WTC11 (cell line): ENCODE measurements at regions of chr17 and their contacts with region 1.

Region 1: GRCh38 chr17:29640413-29640812 is 17.7 kb upstream of the CORO6 start:
- DNase-seq: no peak
- ATAC-seq: no peak
- H3K4me3 Mint-ChIP-seq: no peak overlapping the region
- H3K27ac Mint-ChIP-seq: peak overlapping the region; percentile 38
- H3K4me1 Mint-ChIP-seq: peaks cover 28% of the 10 kb centered on the region
- H3K27me3 Mint-ChIP-seq: no peaks in the 10 kb centered on the region
- CTCF ChIP-seq: no peak

Region 2: GRCh38 chr17:29420128-29420527 is 220.3 kb before region 1 on chr17:
- CTCF ChIA-PET with region 1: no interaction called
- POLR2A ChIA-PET with region 1: no interaction called
- DNase-seq: no peak
- ATAC-seq: no peak
- H3K4me3 Mint-ChIP-seq: no peak overlapping the region
- H3K27ac Mint-ChIP-seq: no peak overlapping the region
- H3K4me1 Mint-ChIP-seq: no peaks in the 10 kb centered on the region
- H3K27me3 Mint-ChIP-seq: no peaks in the 10 kb centered on the region
- CTCF ChIP-seq: no peak

Region 3: DNA sequence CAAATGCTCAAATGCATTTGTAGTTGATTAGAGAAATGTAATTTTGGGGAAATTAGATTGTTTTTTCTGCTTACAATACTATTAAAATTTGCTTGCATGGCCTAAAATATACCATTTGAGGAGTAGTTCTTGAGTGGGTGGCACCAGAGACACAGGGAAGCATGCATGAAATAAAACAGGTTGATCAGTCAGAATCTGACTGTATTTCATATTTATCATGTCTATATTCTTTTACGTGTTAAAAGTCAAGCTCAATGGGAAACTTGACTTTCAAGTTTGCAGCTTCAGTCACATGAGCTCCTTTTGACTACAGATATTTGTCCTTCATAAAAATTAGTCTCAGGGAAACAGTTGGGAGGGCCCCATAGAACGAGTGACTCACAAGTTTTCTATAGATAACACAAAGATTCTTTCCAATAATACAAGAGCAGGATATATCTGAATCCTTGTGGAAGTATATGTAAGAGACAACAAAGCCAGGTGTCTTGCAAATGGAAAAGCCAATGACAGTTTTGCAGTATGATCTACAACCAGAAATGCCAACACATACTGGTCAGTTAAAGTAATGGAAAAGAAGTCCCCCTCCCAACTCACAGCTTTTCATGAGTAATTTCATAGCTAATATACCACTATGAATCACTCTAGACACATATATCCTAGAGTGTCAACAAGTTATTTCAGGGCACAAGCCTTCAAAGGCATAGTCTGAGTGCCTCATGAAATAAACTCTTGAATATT is 24.5 kb after region 1 on chr17:
- CTCF ChIA-PET with region 1: interaction called, 12 read pairs
- POLR2A ChIA-PET with region 1: no interaction called
- DNase-seq: no peak
- ATAC-seq: no peak
- H3K4me3 Mint-ChIP-seq: no peak overlapping the region
- H3K27ac Mint-ChIP-seq: no peak overlapping the region
- H3K4me1 Mint-ChIP-seq: peaks cover 11% of the 10 kb centered on the region
- H3K27me3 Mint-ChIP-seq: no peaks in the 10 kb centered on the region
- CTCF ChIP-seq: no peak

Region 4: DNA sequence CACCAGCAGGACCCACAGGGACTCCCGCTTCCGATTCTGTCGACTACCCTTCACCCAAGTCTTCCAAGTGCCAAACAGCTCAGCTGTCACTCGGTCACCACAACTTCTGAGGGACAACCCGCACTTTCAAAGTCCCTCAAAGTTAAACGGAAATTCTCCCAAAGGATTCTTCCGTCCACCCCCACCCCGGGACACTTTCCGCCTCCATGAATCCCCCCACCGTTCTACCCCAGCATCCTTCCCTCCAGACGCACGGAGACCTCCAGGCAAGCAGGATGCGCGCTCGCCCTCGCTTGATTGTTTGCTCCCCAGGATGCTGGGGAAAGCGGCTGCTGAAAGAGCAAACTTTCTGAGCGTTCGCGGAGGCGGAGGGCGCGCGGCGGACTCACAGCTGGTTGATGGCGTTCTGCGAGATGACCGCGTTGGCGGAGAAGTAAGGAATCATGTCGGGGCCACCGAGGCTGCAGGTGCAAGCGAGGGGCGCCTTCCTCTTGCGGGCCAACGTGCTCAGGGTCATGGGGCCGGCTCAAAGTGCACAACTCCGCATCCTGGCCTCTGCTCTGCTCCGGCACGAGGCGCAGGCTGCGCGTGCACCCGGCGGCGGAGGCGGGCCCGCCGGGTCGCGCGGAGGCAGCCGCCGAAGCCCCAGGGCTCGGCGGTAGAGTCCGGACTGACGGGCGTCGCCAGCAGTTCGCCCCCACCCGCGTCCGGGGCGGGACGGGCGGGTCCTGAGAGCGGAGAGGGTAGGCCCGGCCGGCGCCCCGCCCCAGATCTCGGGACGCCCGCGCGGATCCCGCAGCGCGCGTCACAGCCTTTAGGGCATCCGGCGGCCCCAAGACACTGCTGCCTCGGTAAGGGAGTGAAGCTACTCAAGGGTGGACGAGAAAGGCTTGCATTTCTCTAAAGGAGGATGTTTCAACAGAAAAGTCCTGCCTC is 120.6 kb after region 1 on chr17:
- CTCF ChIA-PET with region 1: interaction called, 18 read pairs
- POLR2A ChIA-PET with region 1: no interaction called
- DNase-seq: peak; percentile 77
- ATAC-seq: peak; percentile 89
- H3K4me3 Mint-ChIP-seq: peak overlapping the region; percentile 83
- H3K27ac Mint-ChIP-seq: no peak overlapping the region; the same call in 1 of the 2 replicates
- H3K4me1 Mint-ChIP-seq: peaks cover 14% of the 10 kb centered on the region
- H3K27me3 Mint-ChIP-seq: peaks cover 21% of the 10 kb centered on the region
- CTCF ChIP-seq: no peak

Region 5: GRCh38 chr17:29789196-29790170 is 149.1 kb after region 1 on chr17:
- CTCF ChIA-PET with region 1: interaction called, 13 read pairs
- POLR2A ChIA-PET with region 1: no interaction called
- DNase-seq: no peak
- ATAC-seq: no peak; the same call in 1 of the 2 replicates
- H3K4me3 Mint-ChIP-seq: no peak overlapping the region
- H3K27ac Mint-ChIP-seq: no peak overlapping the region; the same call in 1 of the 2 replicates
- H3K4me1 Mint-ChIP-seq: peaks cover 40% of the 10 kb centered on the region
- H3K27me3 Mint-ChIP-seq: no peaks in the 10 kb centered on the region
- CTCF ChIP-seq: no peak

Region 6: GRCh38 chr17:29855686-29856085 is 215.3 kb after region 1 on chr17:
- CTCF ChIA-PET with region 1: no interaction called
- POLR2A ChIA-PET with region 1: no interaction called
- DNase-seq: no peak
- ATAC-seq: no peak
- H3K4me3 Mint-ChIP-seq: no peak overlapping the region
- H3K27ac Mint-ChIP-seq: no peak overlapping the region
- H3K4me1 Mint-ChIP-seq: no peaks in the 10 kb centered on the region
- H3K27me3 Mint-ChIP-seq: no peaks in the 10 kb centered on the region
- CTCF ChIP-seq: no peak

Region 7: DNA sequence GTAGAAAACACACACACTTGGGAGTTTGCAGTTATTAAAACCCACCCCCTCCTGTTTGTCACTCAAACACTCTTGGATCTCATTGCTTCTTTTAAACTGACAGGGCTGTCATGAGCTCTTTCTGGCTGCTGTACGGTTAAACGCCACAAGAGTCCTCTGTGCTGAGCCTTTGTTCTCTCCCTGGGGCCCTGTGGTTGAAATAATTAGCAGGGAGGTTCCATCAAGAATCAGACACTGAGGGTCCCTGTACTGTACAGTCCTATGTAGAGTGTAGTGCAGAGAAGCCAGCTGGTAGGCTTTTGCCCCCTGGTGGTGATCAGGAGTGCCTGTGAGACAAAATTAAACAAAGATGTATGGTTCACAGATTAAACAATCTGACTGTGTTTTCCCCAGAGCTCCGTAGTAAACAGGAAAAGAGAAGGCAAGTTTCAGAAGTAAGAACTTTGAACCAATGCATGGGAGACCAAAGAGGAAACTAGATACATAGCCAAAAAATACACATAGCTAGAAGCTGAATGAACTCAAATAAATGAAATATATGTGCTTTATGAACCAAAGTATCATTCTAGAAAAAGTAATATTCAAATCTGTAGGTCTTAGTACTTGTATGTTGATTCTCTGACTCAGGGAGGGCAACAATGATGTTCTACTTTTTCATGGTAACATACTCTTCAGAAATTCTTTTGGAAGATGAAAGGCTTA is 291.0 kb after region 1 on chr17:
- CTCF ChIA-PET with region 1: interaction called, 74 read pairs
- POLR2A ChIA-PET with region 1: no interaction called
- DNase-seq: peak; percentile 23
- ATAC-seq: peak; percentile 10
- H3K4me3 Mint-ChIP-seq: no peak overlapping the region
- H3K27ac Mint-ChIP-seq: no peak overlapping the region
- H3K4me1 Mint-ChIP-seq: peaks cover 12% of the 10 kb centered on the region
- H3K27me3 Mint-ChIP-seq: no peaks in the 10 kb centered on the region
- CTCF ChIP-seq: peak; percentile 61; the same call in 1 of the 2 replicates